MCF 10A (cell line): ENCODE measurements at regions of chr19 and their contacts with region 1.

Region 1: GRCh38 chr19:33125929-33126388 is 6.0 kb upstream of the WDR88 start:
- DNase-seq: peak; percentile 71
- H3K4me3 Mint-ChIP-seq: no peak overlapping the region
- H3K27ac Mint-ChIP-seq: no peak overlapping the region
- H3K4me1 Mint-ChIP-seq: no peaks in the 10 kb centered on the region
- H3K27me3 Mint-ChIP-seq: no peaks in the 10 kb centered on the region
- CTCF ChIP-seq: peak; percentile 72

Region 2: DNA sequence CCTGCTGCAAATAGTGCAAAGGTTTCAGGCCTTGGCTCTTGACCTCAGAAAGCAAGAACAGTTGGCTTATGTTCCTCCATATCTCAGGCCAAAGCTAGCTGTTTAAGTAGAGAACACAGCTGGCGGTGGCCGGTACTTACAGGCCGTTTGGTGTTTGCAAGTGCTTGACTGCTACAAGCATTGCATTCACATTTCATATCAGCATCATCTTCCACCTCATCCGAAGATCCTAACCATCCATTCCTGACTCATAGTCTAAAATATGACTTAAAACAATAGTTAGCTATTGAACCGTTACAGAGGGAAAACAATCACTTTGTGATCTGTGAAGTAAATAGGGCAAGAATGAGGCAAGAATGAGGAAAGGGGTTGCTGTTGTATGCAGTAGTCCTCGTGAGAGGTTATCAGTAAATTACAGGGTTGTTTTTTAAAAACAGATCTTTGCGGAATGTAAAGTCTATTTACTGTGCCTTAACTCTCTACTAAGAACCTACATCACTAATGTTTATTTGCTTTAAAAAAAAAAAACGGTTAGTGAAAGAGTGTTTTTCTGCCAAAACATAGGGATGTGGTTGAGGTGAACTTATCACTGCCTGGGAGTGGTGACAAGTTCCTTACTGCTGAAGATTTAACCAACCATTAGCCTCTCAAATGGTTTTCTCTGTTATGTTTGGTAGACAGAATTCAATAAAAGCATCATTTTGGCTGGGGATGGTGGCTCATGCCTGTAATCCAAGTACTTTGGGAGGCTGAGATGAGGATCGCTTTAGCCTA is 15.6 kb before region 1 on chr19:
- CTCF ChIA-PET with region 1: interaction called, 14 read pairs
- POLR2A ChIA-PET with region 1: interaction called, 3 read pairs
- intact Hi-C with region 1: no loop called
- DNase-seq: no peak
- H3K4me3 Mint-ChIP-seq: no peak overlapping the region
- H3K27ac Mint-ChIP-seq: no peak overlapping the region
- H3K4me1 Mint-ChIP-seq: no peaks in the 10 kb centered on the region
- H3K27me3 Mint-ChIP-seq: no peaks in the 10 kb centered on the region
- CTCF ChIP-seq: no peak

Region 3: DNA sequence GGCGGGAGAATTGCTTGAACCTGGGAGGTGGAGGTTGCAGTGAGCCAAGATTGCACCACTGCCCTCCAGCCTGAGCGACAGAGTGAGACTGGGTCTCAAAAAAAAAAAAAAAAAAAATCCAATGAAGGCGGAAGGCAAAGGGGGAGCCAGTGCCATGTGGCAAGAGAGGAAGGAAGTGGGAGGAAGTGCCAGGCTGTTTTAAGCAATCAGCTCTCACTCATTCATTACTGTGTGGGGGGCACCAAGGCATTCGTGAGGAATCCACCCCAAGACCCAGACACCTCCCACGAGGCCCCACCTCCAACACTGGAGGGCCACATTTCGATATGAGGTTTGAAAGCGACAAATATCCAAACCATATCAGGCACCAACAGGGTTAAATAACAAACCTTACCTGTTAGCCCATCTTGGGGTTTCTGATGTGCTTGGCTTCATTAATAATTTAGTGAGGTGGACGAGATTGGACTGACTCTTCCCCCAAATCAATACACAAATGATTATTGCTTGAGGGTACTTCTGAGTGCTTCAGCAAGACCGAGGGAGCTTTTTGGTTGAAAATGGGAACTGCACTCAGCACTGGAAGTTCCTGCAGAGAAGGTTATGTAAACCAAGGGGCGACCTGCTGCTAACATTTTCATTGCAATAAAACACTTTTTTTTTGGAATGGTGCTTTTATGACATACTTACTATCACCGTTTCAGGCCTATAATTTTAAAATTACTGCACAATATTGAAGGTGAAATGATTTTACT is 60.6 kb after region 1 on chr19:
- CTCF ChIA-PET with region 1: interaction called, 11 read pairs
- POLR2A ChIA-PET with region 1: no interaction called
- intact Hi-C with region 1: loop called (anchors 1 kb)
- DNase-seq: no peak
- H3K4me3 Mint-ChIP-seq: no peak overlapping the region
- H3K27ac Mint-ChIP-seq: no peak overlapping the region
- H3K4me1 Mint-ChIP-seq: no peaks in the 10 kb centered on the region
- H3K27me3 Mint-ChIP-seq: peaks cover 14% of the 10 kb centered on the region
- CTCF ChIP-seq: no peak